ENCODE measurements at regions of chr9 and their contacts with region 1.

Region 1: DNA sequence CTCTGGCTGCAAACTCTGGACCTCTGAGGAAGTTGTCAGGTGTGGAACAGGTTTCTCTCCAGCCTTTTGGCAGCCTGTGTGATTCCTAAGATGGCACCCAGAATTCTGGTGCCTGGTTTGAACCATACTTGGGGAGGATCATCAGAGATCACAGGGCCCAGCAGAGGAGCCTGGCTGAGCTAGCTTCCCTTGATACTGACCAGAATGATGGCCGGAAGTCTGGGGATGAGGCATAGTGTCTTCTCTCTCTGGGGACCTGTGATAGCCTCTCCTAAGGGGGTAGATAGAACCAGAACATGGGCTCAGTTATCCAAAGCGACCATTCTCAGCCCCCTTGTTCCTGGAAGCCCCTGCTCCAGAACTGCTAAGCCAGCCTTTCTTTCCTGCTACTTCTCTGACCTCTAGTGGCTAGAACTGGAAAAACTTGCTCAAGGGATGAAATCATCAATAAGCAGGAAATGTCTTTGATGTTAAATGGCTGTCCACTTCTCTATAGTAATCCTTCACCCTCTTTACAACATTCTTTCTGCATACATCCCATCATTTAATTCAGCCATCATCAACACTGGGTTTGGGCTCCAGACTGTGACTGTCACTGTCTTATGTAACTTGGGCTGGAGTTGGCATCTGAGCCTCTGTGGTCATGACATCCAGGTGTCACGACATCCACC is 55.1 kb downstream of the C9orf152 start:
- DNase-seq: peak in 4 of 9 donors; percentile 17 to 38 (median 32)
- ATAC-seq: peak; percentile 38
- H3K4me3 ChIP-seq: no peak overlapping the region
- H3K4me3 Mint-ChIP-seq: peak overlapping the region in 2 of 10 donors; percentile 23 to 37
- H3K27ac ChIP-seq: no peak overlapping the region
- H3K27ac Mint-ChIP-seq: peak overlapping the region in 3 of 9 donors; percentile 13 to 95 (median 54)
- H3K4me1 ChIP-seq: peaks cover 22 to 41% of the 10 kb centered on the region in 2 donors
- H3K4me1 Mint-ChIP-seq: peaks cover 52 to 98% (median 63%) of the 10 kb centered on the region in 7 donors
- H3K27me3 ChIP-seq: no peaks in the 10 kb centered on the region
- H3K27me3 Mint-ChIP-seq: no peaks in the 10 kb centered on the region

Region 2: GRCh38 chr9:108933718-108934322 is 1219.0 kb before region 1 on chr9 and contains the start of gene ELP1:
- CTCF ChIA-PET with region 1: no interaction called
- POLR2A ChIA-PET with region 1: no interaction called
- intact Hi-C with region 1: loop called in 1 of 2 experiments (anchors 5 kb)
- DNase-seq: peak; percentile 88 to 93 (median 91)
- ATAC-seq: peak; percentile 91
- H3K4me3 ChIP-seq: peak within 1 kb of the TSS; percentile 90
- H3K4me3 Mint-ChIP-seq: peak within 1 kb of the TSS; percentile 88 to 100 (median 99)
- H3K27ac ChIP-seq: peak within 1 kb of the TSS; percentile 92
- H3K27ac Mint-ChIP-seq: peak within 1 kb of the TSS; percentile 96 to 99 (median 98)
- H3K4me1 ChIP-seq: peaks cover 15 to 18% of the 10 kb centered on the region in 2 donors
- H3K4me1 Mint-ChIP-seq: peaks cover 23 to 54% (median 38%) of the 10 kb centered on the region in 7 donors
- H3K27me3 ChIP-seq: no peaks in the 10 kb centered on the region
- H3K27me3 Mint-ChIP-seq: no peaks in the 10 kb centered on the region
- total RNA-seq, gene ELP1: 21.7 to 41.4 (median 26.5) TPM

Region 3: DNA sequence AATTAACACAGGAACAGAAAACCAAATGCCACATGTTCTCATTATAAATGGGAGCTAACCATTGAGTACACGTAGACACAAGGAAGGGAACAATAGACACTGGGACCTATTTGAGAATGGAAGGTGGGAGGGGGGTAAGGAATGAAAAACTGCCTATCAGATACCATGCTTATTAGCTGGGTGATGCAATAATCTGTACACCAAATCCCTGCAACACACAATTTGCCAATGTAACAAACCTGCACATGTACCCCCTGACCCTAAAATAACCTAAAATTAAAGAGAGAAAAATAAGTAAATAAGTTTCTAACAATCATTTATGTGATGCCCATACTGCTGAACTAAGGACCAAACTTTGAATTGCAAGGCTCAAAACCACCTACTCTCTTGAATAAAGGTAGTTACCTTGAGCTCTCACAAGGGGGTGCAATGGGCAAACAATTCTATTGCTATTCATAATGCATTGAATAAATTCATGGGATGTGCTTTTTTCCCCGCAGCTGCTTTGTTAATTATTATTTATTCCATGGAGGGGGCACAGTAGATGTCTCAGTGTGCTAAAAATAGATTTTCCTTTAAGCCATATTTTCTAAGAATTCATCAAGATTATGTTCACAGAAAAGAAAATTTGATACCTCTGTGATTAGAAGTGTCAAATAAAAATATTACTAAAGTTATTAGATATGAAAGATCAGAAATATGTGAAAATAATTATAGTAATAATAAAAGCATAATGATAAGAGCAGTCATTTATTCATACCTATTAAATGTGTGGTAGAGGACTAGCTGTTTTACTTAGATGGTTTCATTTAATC is 578.6 kb before region 1 on chr9:
- CTCF ChIA-PET with region 1: no interaction called
- POLR2A ChIA-PET with region 1: no interaction called
- intact Hi-C with region 1: loop called in 1 of 2 experiments (anchors 5 kb)
- DNase-seq: peak in 4 of 9 donors; percentile 2 to 16 (median 4)
- ATAC-seq: no peak
- H3K4me3 ChIP-seq: no peak overlapping the region
- H3K4me3 Mint-ChIP-seq: no peak overlapping the region
- H3K27ac ChIP-seq: no peak overlapping the region
- H3K27ac Mint-ChIP-seq: no peak overlapping the region
- H3K4me1 ChIP-seq: no peaks in the 10 kb centered on the region
- H3K4me1 Mint-ChIP-seq: no peaks in the 10 kb centered on the region
- H3K27me3 ChIP-seq: no peaks in the 10 kb centered on the region
- H3K27me3 Mint-ChIP-seq: peaks cover under 1 to 30% (median 15%) of the 10 kb centered on the region in 5 donors

Region 4: DNA sequence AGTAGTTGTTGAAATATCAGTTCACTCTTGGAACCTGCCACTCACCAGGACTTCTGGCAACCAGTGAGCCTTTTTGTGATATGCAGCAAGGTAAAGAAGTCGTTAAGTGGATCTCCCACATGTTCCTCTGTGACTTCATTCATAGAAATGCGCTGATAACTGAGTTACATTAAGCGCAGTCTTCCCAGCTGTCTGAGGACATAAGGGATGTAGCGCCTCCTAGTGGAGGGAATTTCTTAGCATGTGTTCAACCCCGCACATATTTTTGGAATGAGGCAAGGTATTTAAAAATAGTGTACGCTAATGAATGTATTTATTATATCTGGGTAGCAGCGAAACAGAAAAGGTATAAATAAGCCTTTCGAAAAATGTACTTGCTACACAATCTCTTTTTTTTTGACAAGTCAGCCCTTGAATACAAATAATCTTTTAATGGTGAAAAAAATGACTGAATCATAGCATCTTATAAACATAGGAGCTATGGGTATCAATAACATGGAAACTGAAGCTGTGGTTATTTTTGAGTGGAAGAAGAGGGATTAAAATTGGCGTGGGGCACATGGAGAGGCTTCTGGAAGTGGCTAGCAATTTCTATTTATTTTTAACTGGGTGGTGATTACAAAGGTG is 334.9 kb before region 1 on chr9:
- CTCF ChIA-PET with region 1: no interaction called
- POLR2A ChIA-PET with region 1: no interaction called
- intact Hi-C with region 1: loop called in 1 of 2 experiments (anchors 1 kb)
- DNase-seq: peak in 4 of 9 donors; percentile 1 to 31 (median 10)
- ATAC-seq: no peak
- H3K4me3 ChIP-seq: no peak overlapping the region
- H3K4me3 Mint-ChIP-seq: no peak overlapping the region
- H3K27ac ChIP-seq: no peak overlapping the region
- H3K27ac Mint-ChIP-seq: no peak overlapping the region
- H3K4me1 ChIP-seq: no peaks in the 10 kb centered on the region
- H3K4me1 Mint-ChIP-seq: peaks cover 0 to under 1% (median 0%) of the 10 kb centered on the region in 7 donors
- H3K27me3 ChIP-seq: no peaks in the 10 kb centered on the region
- H3K27me3 Mint-ChIP-seq: peaks cover 5 to 16% (median 7%) of the 10 kb centered on the region in 5 donors

Region 5: GRCh38 chr9:109903515-109904138 is 249.2 kb before region 1 on chr9:
- CTCF ChIA-PET with region 1: interaction called, 8 read pairs
- POLR2A ChIA-PET with region 1: no interaction called
- intact Hi-C with region 1: loop called (anchors 1 kb)
- DNase-seq: peak; percentile 11 to 73 (median 53)
- ATAC-seq: peak; percentile 84
- H3K4me3 ChIP-seq: no peak overlapping the region
- H3K4me3 Mint-ChIP-seq: no peak overlapping the region
- H3K27ac ChIP-seq: no peak overlapping the region
- H3K27ac Mint-ChIP-seq: no peak overlapping the region
- H3K4me1 ChIP-seq: no peaks in the 10 kb centered on the region
- H3K4me1 Mint-ChIP-seq: peaks cover 0 to 37% (median 5%) of the 10 kb centered on the region in 7 donors
- H3K27me3 ChIP-seq: no peaks in the 10 kb centered on the region
- H3K27me3 Mint-ChIP-seq: no peaks in the 10 kb centered on the region

Region 6: GRCh38 chr9:110048403-110048975 is 104.3 kb before region 1 on chr9:
- CTCF ChIA-PET with region 1: interaction called, 3 read pairs
- POLR2A ChIA-PET with region 1: no interaction called
- intact Hi-C with region 1: loop called in 1 of 2 experiments (anchors 1 kb)
- DNase-seq: peak; percentile 43 to 88 (median 71)
- ATAC-seq: peak; percentile 97
- H3K4me3 ChIP-seq: peak overlapping the region; percentile 83
- H3K4me3 Mint-ChIP-seq: peak overlapping the region; percentile 87 to 99 (median 92)
- H3K27ac ChIP-seq: no peak overlapping the region
- H3K27ac Mint-ChIP-seq: peak overlapping the region in 8 of 9 donors; percentile 54 to 90 (median 70)
- H3K4me1 ChIP-seq: peaks cover 5 to 10% of the 10 kb centered on the region in 2 donors
- H3K4me1 Mint-ChIP-seq: peaks cover 23 to 55% (median 38%) of the 10 kb centered on the region in 7 donors
- H3K27me3 ChIP-seq: no peaks in the 10 kb centered on the region
- H3K27me3 Mint-ChIP-seq: peaks cover 0 to 16% (median 11%) of the 10 kb centered on the region in 5 donors

Region 7: GRCh38 chr9:110083866-110084265 is 69.0 kb before region 1 on chr9:
- CTCF ChIA-PET with region 1: no interaction called
- POLR2A ChIA-PET with region 1: no interaction called
- intact Hi-C with region 1: loop called in 1 of 2 experiments (anchors 2 kb)
- DNase-seq: no peak
- ATAC-seq: no peak
- H3K4me3 ChIP-seq: no peak overlapping the region
- H3K4me3 Mint-ChIP-seq: no peak overlapping the region
- H3K27ac ChIP-seq: no peak overlapping the region
- H3K27ac Mint-ChIP-seq: peak overlapping the region in 1 of 9 donors; percentile 51
- H3K4me1 ChIP-seq: no peaks in the 10 kb centered on the region
- H3K4me1 Mint-ChIP-seq: peaks cover 13 to 68% (median 24%) of the 10 kb centered on the region in 7 donors
- H3K27me3 ChIP-seq: no peaks in the 10 kb centered on the region
- H3K27me3 Mint-ChIP-seq: no peaks in the 10 kb centered on the region